ENCODE measurements at regions of chr6 and their contacts with region 1.

Region 1: DNA sequence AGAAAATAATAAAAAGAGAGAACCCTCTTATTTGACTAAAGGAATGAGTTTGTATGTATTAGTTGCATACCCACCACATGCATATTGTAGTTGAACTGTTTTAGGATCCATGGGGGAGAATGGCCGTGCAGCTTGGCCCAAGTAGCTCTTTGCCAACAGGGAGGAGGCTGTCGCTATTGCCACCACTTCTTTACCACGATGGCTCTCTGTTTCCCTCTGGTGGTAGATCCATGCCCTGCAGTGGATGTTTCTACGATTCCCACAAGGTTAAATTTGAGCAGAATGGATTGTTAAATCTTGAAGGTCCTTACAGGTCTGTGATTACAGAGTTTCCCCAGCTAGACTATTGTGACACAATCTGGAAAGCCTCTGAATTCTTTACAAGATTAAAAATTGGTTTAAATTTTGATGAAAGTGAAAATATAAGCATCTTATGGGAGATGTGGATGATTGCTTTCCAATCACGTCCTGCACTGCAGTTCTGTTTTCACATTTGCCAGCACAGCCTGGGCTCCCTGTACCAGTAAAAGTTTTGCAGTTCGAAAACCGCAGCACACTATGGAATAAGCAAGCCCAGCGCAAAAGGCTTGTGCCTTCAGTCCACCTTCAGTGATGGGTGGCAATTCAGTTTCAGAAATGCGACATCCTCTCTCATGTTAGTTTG is 34.4 kb upstream of the FNDC1 start:
- DNase-seq: no peak
- H3K4me3 ChIP-seq: no peak overlapping the region
- CTCF ChIP-seq: peak; percentile 86

Region 2: DNA sequence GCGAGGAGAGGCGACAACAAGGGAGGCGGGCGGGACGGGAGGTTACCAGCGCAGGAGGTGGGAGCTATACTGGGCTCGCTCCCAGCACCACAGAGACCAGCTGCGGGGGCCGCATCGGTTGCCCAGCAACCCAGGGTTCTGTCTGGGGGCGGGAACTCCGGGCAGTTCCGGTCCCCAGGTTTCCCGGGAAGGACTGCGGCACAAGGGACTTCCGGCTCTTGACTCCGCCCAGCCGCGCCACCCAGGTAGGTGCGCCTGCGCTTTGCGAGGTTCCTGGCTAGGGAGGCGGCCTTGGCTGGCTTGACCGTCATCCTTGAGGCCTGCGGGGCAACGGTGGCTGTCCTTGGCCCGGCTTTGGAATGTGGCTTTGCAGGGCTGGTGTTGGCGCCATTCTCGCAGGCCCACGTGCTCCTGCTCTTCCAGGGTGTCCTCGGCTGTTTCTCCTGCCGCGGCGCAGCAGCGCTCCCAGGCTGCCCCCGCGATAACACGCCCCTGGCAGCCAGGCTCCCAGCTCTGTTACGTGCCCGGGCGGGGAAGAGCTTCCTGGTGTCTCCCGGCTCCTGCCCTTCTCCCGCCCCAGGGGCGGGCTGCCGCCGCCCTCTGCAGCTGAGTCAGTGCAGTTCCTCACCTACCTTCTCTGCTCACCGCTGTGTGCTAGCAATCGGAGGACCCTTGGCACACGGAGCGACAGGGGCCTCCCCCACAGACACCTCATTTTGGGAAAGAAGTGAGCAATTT is 135.0 kb before region 1 on chr6 and contains the start of gene RSPH3:
- CTCF ChIA-PET with region 1: interaction called, 20 read pairs
- POLR2A ChIA-PET with region 1: no interaction called
- DNase-seq: peak; percentile 56
- H3K4me3 ChIP-seq: peak within 1 kb of the TSS; percentile 88
- CTCF ChIP-seq: peak; percentile 22

Region 3: DNA sequence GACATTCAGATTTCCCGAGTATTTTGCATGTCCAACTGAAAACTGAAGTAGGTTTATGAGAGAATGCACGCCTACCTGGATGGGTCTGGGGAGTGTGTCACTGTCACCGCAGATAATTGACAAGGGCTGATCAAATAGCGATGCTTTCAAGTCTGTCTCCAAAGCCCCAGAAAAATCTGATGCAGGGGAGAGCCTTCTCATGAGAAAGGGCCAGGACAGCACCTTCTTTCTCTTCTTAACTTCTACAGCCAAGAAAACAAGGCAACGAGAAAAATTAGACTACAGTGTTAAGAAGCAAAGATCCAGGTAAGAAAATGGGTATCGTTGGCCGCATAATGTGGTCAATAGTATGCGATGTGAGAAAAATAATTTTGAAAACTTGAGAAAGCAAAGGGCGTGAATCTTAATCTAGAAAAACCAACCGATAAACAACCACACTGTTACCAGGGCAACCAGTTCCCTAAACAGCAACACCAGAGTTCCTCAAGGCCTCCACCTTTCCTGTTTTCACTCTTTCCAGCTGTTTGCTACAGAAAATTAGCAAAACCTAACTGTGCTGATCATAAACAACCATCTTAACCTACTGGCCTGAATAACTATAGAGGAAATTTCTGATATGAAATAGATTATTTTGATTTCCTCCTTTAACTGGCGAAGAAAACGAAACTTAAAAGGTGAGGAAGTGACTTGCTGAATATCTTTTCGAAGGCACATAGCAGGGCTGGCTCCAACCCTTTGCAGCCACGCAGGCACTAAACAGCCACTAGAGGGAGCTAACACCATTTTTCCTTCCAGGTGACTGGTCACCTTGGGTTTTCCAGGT is 92.6 kb before region 1 on chr6:
- CTCF ChIA-PET with region 1: interaction called, 13 read pairs
- POLR2A ChIA-PET with region 1: no interaction called
- DNase-seq: no peak
- H3K4me3 ChIP-seq: no peak overlapping the region
- CTCF ChIP-seq: peak; percentile 88

Region 4: DNA sequence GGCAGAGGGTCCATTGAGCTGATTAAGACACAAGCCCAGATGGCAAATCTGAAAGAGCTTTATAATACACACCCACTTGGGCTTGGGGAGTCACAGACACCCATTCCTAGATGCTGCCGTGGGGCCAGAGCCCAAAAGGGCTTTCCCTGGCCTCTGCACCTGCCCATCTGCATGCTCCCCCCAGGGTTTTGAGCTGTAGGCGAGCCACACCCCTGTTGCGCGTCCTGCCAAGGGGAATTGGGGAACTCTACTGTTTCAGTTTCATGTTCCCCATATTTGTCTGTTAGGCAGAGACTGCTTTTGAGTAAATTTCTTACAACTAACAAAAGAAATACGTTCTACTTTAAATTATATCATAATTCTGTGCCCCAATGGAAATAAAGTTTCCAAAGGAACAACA is 18.5 kb before region 1 on chr6:
- CTCF ChIA-PET with region 1: interaction called, 27 read pairs
- POLR2A ChIA-PET with region 1: no interaction called
- DNase-seq: no peak
- H3K4me3 ChIP-seq: no peak overlapping the region
- CTCF ChIP-seq: no peak

Measured in AG04449 (cell line).